ENCODE measurements at regions of chr11 and their contacts with region 1.

Region 1: DNA sequence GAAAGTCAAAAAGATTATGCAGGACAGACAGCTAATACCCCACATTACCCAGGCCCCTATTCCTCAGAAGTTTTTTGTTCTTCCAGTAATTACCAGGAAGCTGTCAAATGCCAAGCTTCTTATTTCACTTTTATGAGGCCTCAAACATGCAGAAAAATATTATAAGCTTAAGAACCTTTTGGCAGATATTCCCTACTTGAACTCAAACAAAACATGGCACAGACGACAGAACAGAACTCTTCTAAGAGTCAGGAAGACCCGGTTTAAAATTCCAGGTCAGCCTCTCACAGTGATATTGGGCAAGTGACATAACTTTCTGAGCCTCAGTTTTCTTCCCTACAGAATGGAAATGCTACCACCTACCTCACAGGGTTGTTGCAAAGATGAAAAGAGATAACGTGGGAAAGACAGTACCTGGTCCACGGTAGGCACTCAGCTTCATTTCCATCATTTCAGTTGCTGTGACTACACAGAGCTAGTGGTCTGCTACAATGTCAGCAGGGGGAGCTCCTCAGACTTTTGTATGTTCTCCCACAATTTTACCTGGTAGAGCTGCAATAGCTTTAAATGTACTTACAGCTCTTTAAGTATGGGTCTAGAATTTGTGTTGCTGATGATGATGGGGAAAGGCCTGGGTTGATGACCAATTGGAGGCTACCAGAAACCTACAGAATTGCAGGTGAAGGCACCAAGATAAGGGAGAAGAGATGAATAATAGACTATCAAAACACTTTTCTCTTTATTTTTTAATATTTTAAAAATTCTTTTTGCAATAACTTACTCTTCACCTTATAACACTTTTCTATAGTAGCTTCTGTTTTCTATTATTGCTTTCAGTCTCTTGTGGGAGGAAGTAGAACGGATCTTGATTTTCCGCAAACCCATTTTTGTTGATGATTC is 98.3 kb upstream of the CHRM4 start:
- DNase-seq: no peak
- ATAC-seq: peak; percentile 30 to 48

Region 2: GRCh38 chr11:46427364-46427763 is 62.5 kb before region 1 on chr11:
- intact Hi-C with region 1: no loop called
- DNase-seq: no peak
- ATAC-seq: no peak

Region 3: GRCh38 chr11:46529095-46529905 is 39.4 kb after region 1 on chr11:
- intact Hi-C with region 1: loop called in 1 of 2 experiments (anchors 5 kb)
- DNase-seq: peak; percentile 73
- ATAC-seq: peak; percentile 83 to 85

Measured in left cardiac atrium (tissue), 4 donors.